MCF 10A (cell line): ENCODE measurements at regions of chr4 and their contacts with region 1.

Region 1: DNA sequence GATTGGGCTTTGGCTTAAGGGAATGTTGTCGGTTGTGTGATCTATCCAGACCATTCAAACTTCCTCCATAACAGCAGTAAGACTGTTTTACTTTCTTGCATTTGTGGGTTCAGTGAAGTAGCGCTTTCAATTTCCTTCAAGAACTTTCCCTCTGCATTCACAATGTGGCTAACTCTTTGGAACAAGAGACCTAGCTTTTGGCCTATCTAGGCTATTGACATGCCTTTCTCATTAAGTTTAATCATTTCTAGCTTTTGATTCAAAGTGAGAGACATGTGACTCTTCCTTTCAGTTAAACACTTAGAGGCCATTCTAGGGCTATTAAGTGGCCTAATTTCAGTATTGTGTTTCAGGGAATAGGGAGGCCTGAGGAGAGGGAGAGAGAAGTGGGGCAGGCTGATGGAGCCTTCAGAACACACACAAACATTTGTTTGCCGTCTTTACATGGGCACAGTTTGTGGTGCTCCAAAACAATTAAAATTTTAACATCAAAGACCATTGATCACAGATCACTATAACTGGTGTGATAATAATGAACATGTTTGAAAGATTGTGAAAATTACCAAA is 34.1 kb downstream of the ADH5 start:
- DNase-seq: no peak
- H3K4me3 Mint-ChIP-seq: no peak overlapping the region
- H3K27ac Mint-ChIP-seq: no peak overlapping the region
- H3K4me1 Mint-ChIP-seq: peaks cover 14% of the 10 kb centered on the region
- H3K27me3 Mint-ChIP-seq: no peaks in the 10 kb centered on the region
- CTCF ChIP-seq: no peak

Region 2: DNA sequence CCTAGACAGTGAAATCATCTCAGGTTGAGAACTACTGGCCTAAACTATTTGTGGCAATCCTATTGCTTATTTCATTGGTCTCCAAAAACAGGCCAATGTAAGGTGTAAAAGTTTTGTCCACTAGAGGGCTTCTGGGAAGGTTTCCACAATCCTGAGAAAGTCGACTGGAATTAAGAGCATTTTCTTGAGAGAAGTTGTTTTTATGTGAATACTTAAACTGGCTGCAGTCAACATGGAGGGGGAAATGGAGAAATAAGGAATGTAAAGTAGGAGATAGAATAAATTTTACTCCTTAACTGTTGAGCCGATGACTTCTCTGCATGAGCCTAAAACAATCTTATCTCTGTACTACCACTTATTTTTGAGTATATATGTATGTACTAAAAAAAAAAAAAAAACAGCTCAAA is 114.6 kb before region 1 on chr4:
- CTCF ChIA-PET with region 1: interaction called, 23 read pairs
- POLR2A ChIA-PET with region 1: no interaction called
- intact Hi-C with region 1: no loop called
- DNase-seq: peak; percentile 68
- H3K4me3 Mint-ChIP-seq: no peak overlapping the region
- H3K27ac Mint-ChIP-seq: no peak overlapping the region
- H3K4me1 Mint-ChIP-seq: peaks cover 22% of the 10 kb centered on the region
- H3K27me3 Mint-ChIP-seq: no peaks in the 10 kb centered on the region
- CTCF ChIP-seq: peak; percentile 55

Region 3: DNA sequence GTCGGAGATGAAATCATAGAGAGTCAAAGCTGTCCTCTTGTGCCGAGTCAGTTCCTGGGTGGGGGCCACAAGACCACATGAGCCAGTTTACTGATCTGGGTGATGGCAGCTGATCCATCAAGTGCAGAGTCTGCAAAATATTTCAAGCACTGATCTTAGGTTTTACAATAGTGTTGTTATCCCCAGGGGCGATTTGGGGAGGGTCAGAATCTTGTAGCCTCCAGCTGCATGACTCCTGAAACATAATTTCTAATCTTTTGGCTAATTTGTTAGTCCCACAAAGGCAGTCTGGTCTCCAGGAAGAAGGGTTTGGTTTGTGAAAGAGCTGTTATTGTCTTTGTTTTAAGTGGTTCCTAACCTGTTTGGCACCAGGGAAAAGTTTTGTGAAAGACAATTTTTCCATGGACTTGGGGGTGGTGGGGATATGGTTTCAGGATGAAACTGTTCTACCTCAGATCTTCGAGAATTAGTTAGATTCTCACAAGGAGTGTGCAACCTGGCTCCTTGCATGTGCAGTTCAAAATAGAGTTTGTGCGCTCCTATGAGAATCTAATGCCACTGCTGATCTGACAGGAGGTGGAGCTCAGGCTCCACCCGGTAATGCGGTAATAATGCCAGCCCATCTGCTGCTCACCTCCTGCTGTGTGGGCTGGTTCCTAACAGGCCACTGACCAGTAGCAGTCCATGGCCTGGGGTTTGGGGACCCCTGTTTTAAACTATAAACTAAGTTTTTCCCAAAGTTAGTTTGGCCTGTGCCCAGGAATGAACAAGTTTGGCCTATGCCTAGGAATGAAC is 29.8 kb before region 1 on chr4:
- CTCF ChIA-PET with region 1: interaction called, 13 read pairs
- POLR2A ChIA-PET with region 1: no interaction called
- intact Hi-C with region 1: loop called (anchors 1 kb)
- DNase-seq: no peak
- H3K4me3 Mint-ChIP-seq: no peak overlapping the region
- H3K27ac Mint-ChIP-seq: no peak overlapping the region
- H3K4me1 Mint-ChIP-seq: peaks cover 27% of the 10 kb centered on the region
- H3K27me3 Mint-ChIP-seq: no peaks in the 10 kb centered on the region
- CTCF ChIP-seq: no peak

Region 4: GRCh38 chr4:99043346-99043745 is 11.2 kb before region 1 on chr4:
- CTCF ChIA-PET with region 1: interaction called, 10 read pairs
- POLR2A ChIA-PET with region 1: interaction called, 3 read pairs
- intact Hi-C with region 1: no loop called
- DNase-seq: no peak
- H3K4me3 Mint-ChIP-seq: no peak overlapping the region
- H3K27ac Mint-ChIP-seq: no peak overlapping the region
- H3K4me1 Mint-ChIP-seq: no peaks in the 10 kb centered on the region
- H3K27me3 Mint-ChIP-seq: no peaks in the 10 kb centered on the region
- CTCF ChIP-seq: no peak

Region 5: GRCh38 chr4:99088481-99089365 is 34.2 kb after region 1 on chr4 and contains the start of gene ADH5:
- CTCF ChIA-PET with region 1: interaction called, 4 read pairs
- POLR2A ChIA-PET with region 1: interaction called, 14 read pairs
- intact Hi-C with region 1: no loop called
- DNase-seq: peak; percentile 84
- H3K4me3 Mint-ChIP-seq: peak within 1 kb of the TSS; percentile 89
- H3K27ac Mint-ChIP-seq: peak within 1 kb of the TSS; percentile 72
- H3K4me1 Mint-ChIP-seq: peaks cover 35% of the 10 kb centered on the region
- H3K27me3 Mint-ChIP-seq: no peaks in the 10 kb centered on the region
- CTCF ChIP-seq: no peak
- total RNA-seq, gene ADH5: 110 and 112 TPM in 2 replicates

Region 6: GRCh38 chr4:99219479-99219878 is 165.0 kb after region 1 on chr4:
- CTCF ChIA-PET with region 1: no interaction called
- POLR2A ChIA-PET with region 1: no interaction called
- intact Hi-C with region 1: no loop called
- DNase-seq: no peak
- H3K4me3 Mint-ChIP-seq: no peak overlapping the region
- H3K27ac Mint-ChIP-seq: no peak overlapping the region
- H3K4me1 Mint-ChIP-seq: no peaks in the 10 kb centered on the region
- H3K27me3 Mint-ChIP-seq: no peaks in the 10 kb centered on the region
- CTCF ChIP-seq: no peak